ENCODE measurements at regions of chr22 and their contacts with region 1.

Region 1: DNA sequence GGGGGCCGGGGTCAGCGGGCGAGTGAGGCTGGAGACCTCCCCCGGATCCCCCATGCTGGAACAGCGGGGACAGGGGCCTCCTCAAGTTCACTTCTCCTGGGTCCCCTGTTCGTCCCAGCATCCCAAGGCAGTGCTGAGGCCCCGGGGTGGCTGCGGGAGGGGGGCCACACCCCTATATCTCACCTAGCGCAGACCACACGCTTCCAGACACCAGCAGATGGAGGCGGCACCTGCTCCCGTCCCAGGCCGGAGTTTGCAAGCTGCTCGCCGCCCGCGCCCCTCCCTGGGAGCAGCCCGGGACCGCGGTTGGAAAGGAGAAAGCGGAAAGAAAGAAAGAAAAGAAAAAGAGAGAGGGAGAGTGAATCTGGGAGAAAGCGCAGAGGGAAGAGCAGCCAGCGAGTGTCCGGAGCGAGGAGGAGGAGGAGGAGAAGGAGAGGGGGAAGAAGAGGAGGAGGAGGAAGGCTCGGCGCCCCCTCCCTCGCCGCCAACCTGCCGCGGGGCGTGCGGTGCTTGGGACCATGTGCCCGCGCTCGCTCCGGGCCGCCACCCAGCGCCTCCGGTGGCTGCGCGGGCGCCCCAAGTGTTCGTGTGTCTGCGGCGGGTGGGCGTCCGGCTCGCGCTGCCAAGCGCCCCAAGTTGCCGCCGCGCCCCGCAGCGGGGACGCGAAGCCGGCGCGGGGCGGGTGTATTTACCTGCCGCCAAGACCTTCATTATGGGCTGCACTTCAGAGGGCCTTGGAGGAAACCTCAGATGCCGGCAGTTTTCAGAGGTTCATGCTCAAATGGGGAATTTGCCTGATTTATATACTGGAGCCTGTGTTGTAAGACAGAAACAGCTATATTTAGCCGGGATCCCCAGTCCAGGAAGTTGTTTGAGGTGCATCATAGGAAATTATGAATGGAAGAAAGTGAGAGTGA is at the start of gene LIF:
- DNase-seq: peak; percentile 89
- H3K4me3 Mint-ChIP-seq: peak within 1 kb of the TSS; percentile 97
- H3K27ac Mint-ChIP-seq: peak within 1 kb of the TSS; percentile 100
- H3K4me1 Mint-ChIP-seq: peaks cover 67% of the 10 kb centered on the region
- H3K27me3 Mint-ChIP-seq: no peaks in the 10 kb centered on the region
- total RNA-seq, gene LIF: 509 and 511 TPM in 2 replicates

Region 2: DNA sequence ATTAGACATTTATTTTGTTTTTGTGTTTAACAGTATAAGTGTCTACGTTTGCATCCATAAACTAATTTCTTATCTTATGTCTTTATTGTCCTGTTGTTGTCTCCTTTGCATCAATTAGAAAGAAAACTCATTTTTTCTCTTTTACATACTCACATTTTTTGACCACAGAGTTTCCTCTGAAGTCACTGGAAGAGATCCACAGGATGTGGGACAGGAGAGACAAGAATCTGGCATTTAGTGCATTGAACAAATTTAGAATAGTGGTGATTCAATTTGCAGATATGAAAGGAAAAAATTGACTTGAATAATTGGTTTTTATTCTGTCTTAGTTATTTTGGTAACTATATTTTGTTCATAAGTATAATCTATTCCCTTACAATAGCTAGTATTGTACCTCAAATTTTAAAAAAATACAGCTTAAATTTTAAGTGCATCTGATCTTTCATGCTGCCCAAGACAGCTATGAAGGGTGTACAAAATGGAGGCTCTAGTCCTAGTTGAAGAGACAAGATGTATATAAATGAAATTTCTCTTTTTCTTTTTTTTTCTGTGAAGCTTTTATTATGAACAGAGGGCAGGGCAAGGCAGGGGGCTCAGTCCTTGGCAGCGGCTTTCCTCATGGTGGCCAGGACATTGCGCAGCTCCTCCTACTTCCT is 141.6 kb before region 1 on chr22:
- intact Hi-C with region 1: loop called (anchors 1 kb)
- DNase-seq: peak; percentile 79
- H3K4me3 Mint-ChIP-seq: peak overlapping the region; percentile 54
- H3K27ac Mint-ChIP-seq: peak overlapping the region; percentile 89
- H3K4me1 Mint-ChIP-seq: peaks cover 45% of the 10 kb centered on the region
- H3K27me3 Mint-ChIP-seq: no peaks in the 10 kb centered on the region

Region 3: DNA sequence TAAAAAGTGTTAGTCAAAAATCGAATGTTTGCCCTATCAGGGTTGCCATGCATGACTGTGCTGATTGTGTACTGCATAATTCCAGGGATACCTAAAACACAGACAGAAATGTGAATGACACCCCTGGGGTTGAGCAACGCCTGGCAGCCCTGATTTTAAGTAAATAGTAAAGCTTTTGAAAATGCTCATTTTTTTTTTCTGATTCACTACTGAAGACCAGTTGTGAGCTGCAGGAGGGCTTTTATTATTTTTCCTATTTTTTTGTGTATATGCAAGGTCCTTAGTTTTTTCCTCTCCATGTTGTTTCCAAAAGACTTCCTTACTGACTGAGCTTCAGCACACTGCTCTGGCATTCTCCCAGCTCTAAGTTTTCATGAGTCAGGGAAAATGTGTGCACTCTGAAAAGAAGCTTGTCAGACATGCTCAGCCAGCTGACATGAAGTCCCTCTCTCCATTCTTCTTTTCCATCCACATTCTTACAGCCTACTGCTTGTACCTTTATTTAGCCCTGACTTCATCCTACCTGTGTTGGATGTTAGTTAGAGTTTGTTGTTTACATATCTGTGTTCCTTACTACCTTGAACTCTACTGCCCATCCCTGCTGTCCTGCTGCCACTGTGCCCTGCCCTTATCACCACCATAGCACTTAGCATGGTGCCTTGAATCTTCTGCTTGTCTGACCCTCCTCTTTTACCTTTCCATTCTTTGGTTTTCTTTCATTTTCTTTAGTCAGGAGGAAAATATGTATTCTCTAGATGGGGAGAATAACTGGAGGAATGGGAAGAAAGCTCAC is 86.5 kb before region 1 on chr22:
- intact Hi-C with region 1: loop called (anchors 1 kb)
- DNase-seq: no peak
- H3K4me3 Mint-ChIP-seq: peak overlapping the region; percentile 37
- H3K27ac Mint-ChIP-seq: peak overlapping the region; percentile 96
- H3K4me1 Mint-ChIP-seq: peaks cover 53% of the 10 kb centered on the region
- H3K27me3 Mint-ChIP-seq: no peaks in the 10 kb centered on the region

Region 4: GRCh38 chr22:30167296-30167695 is 78.9 kb before region 1 on chr22:
- intact Hi-C with region 1: loop called (anchors 1 kb)
- DNase-seq: no peak
- H3K4me3 Mint-ChIP-seq: no peak overlapping the region
- H3K27ac Mint-ChIP-seq: no peak overlapping the region
- H3K4me1 Mint-ChIP-seq: peaks cover 26% of the 10 kb centered on the region
- H3K27me3 Mint-ChIP-seq: no peaks in the 10 kb centered on the region

Region 5: DNA sequence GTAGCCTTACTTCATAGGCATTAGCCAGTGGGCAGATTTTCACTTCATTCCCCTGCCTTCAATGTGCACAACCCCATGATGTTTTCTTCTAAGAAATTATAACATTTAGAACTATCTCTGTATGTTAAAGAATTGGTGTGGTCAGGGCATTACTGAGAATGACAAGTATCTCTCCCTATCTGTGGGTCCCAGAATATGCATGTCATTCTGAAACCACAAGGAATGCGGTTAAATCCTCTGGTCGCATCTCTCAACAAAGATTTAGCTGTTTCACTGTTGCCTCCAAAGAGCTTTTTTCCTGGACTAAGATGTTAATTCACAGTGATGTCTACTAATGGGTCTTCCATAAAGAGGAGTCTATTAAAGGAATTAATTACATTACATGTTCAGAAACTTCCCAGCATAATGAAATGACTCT is 62.4 kb before region 1 on chr22:
- intact Hi-C with region 1: loop called (anchors 1 kb)
- DNase-seq: peak; percentile 81
- H3K4me3 Mint-ChIP-seq: peak overlapping the region; percentile 61
- H3K27ac Mint-ChIP-seq: peak overlapping the region; percentile 96
- H3K4me1 Mint-ChIP-seq: peaks cover 82% of the 10 kb centered on the region
- H3K27me3 Mint-ChIP-seq: no peaks in the 10 kb centered on the region

Region 6: GRCh38 chr22:30221121-30221992 is 24.9 kb before region 1 on chr22:
- intact Hi-C with region 1: loop called (anchors 2 kb)
- DNase-seq: peak; percentile 91
- H3K4me3 Mint-ChIP-seq: peak overlapping the region; percentile 69
- H3K27ac Mint-ChIP-seq: peak overlapping the region; percentile 94
- H3K4me1 Mint-ChIP-seq: peaks cover 73% of the 10 kb centered on the region
- H3K27me3 Mint-ChIP-seq: no peaks in the 10 kb centered on the region

Region 7: DNA sequence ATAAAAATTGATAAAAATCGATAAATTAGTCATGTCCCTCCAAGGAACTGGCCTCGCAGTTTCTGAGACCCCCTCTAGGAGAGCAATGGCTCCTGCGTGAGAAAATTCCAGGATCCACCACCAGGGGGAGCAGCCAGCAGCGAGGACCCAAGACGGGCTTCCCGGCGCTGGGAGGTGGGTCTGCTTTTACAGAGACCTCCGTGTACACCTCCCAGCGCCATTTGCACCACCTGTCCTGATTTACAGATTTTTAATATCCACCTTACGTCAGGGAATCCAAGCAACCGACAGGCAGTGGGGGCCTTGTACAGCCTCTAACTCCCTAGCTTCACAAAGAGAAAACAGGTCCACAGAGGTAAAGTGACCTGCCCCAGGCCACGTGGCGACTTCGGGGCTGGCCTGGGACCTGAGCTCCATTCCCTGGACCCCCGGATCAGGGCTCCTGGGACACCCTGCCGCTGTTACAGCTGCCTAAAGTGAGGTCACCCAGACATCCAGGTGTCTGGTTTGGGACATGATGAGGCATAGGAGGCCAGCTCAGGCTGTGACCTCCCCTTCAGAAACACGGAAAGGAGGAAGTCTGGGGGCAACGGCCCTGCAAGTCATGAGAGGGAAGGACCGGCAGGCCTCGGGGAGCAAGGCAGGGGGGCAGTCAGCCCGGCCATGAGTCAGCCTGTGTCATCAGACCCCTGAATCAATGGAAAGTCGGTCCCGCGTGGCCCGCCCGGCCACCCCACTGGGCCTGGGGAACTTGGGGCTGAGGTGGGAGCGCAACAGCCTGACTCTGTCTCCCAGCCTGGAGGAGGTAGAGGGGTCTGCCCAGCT is 16.9 kb after region 1 on chr22:
- intact Hi-C with region 1: loop called (anchors 1 kb)
- DNase-seq: peak; percentile 95
- H3K4me3 Mint-ChIP-seq: peak overlapping the region; percentile 99
- H3K27ac Mint-ChIP-seq: peak overlapping the region; percentile 90
- H3K4me1 Mint-ChIP-seq: peaks cover 59% of the 10 kb centered on the region
- H3K27me3 Mint-ChIP-seq: no peaks in the 10 kb centered on the region

Measured in activated CD4-positive, alpha-beta T cell treated with anti-CD3 and anti-CD28 coated beads, Interleukin-2, amount 10 ng/mL, durations not matched to agents 24 days and 14 days (primary cell).